Vagina (tissue), 2 donors: ENCODE measurements at regions of chr13 and their contacts with region 1.

Region 1: DNA sequence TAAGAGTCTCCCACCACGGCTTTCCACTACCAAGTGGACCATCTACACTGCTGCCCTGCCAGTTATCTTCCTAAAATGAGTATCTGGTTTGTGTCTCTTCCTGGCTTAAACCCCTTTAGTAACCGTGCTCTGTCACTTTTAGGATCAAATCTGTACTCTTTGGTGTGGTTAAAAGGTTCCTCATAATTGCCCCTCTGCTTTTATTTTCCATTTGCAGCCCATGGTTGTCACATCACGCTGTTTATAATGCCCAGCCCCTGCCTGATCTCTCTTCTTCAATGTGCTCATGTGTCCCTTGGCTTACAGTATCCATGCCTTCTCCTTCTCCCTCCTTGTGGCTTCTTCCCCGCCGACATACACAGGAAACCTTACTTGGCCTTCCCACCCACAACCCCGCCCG is 100.1 kb downstream of the DGKH start:
- DNase-seq: no peak
- H3K4me3 ChIP-seq: no peak overlapping the region
- H3K27ac ChIP-seq: no peak overlapping the region
- H3K4me1 ChIP-seq: no peaks in the 10 kb centered on the region
- H3K27me3 ChIP-seq: no peaks in the 10 kb centered on the region
- CTCF ChIP-seq: no peak
- POLR2A ChIP-seq: no peak

Region 2: GRCh38 chr13:40422588-40423235 is 1725.8 kb before region 1 on chr13:
- intact Hi-C with region 1: no loop called
- DNase-seq: no peak
- H3K4me3 ChIP-seq: no peak overlapping the region
- H3K27ac ChIP-seq: no peak overlapping the region
- H3K4me1 ChIP-seq: no peaks in the 10 kb centered on the region
- H3K27me3 ChIP-seq: no peaks in the 10 kb centered on the region
- CTCF ChIP-seq: no peak
- POLR2A ChIP-seq: no peak

Region 3: GRCh38 chr13:42136518-42136917 is 12.0 kb before region 1 on chr13:
- intact Hi-C with region 1: loop called (anchors 1 kb)
- DNase-seq: no peak
- H3K4me3 ChIP-seq: no peak overlapping the region
- H3K27ac ChIP-seq: no peak overlapping the region
- H3K4me1 ChIP-seq: no peaks in the 10 kb centered on the region
- H3K27me3 ChIP-seq: no peaks in the 10 kb centered on the region
- CTCF ChIP-seq: no peak
- POLR2A ChIP-seq: no peak

Region 4: GRCh38 chr13:43546251-43546650 is 1397.7 kb after region 1 on chr13:
- intact Hi-C with region 1: no loop called
- DNase-seq: no peak
- H3K4me3 ChIP-seq: no peak overlapping the region
- H3K27ac ChIP-seq: no peak overlapping the region
- H3K4me1 ChIP-seq: peaks cover 25% of the 10 kb centered on the region
- H3K27me3 ChIP-seq: no peaks in the 10 kb centered on the region
- CTCF ChIP-seq: no peak
- POLR2A ChIP-seq: no peak